ENCODE measurements at regions of chr19 and their contacts with region 1.

Region 1: DNA sequence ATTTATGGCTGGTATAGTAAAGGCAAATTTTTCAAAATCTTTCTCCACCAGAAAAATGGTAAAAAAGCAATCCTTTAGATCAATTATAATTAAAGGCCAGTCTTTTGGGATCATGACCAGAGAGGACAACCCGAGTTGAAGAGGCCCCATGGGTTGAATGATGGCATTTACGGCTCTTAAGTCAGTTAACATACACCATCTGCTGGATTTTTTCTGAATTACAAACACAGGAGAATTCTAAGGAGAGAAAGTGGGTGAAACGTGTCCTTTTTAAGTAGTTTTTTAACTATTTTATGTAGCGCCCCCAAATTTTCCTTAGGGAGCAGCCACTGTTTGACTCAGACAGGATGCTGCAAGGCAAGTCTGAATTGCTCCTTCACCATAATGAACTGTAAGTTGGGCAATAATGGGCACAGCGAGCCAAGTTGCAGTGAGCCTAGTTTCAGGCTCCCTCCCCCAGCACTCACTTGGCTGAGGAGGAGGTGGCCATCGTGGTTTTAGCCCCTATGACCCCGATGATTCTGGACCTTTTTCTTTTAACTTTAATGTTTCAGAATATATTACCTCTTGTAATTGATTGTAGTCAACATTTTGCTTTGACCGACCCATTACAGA is 13.6 kb upstream of the ZNF611 start:
- DNase-seq: peak in 1 of 2 donors; percentile 37
- ATAC-seq: peak in 1 of 4 donors; percentile 30
- H3K4me3 ChIP-seq: no peak overlapping the region
- H3K27ac ChIP-seq: no peak overlapping the region
- H3K4me1 ChIP-seq: no peaks in the 10 kb centered on the region
- H3K27me3 ChIP-seq: no peaks in the 10 kb centered on the region
- CTCF ChIP-seq: peak; percentile 27

Region 2: GRCh38 chr19:52248241-52248640 is 500.2 kb before region 1 on chr19:
- intact Hi-C with region 1: loop called (anchors 5 to 10 kb)
- DNase-seq: peak; percentile 43 to 79
- ATAC-seq: peak in 3 of 4 donors; percentile 71 to 77 (median 76)
- H3K4me3 ChIP-seq: no peak overlapping the region
- H3K27ac ChIP-seq: no peak overlapping the region
- H3K4me1 ChIP-seq: no peaks in the 10 kb centered on the region
- H3K27me3 ChIP-seq: no peaks in the 10 kb centered on the region
- CTCF ChIP-seq: peak; percentile 45

Region 3: DNA sequence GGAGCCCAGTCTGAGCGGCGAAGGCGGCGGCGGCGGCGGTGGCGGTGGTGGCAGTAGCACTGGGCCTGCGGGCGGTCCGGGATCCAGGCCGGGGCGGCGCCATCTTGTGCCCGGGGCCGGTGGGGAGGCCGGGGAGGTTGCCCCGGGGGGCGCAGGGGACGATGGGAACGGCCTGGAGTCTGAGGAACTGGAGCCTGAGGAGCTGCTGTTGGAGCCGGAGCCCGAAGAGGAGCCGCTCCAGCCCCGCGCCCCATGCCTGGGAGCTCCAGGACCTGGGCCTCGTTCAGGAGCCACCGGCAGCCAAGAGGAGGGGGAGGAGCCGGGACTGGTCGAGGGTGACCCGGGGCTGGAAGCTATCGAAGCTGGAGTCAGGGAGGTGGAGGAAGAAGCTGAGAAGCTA is 61.4 kb after region 1 on chr19:
- intact Hi-C with region 1: no loop called
- DNase-seq: no peak
- ATAC-seq: no peak
- H3K4me3 ChIP-seq: no peak overlapping the region
- H3K27ac ChIP-seq: no peak overlapping the region
- H3K4me1 ChIP-seq: no peaks in the 10 kb centered on the region
- H3K27me3 ChIP-seq: no peaks in the 10 kb centered on the region
- CTCF ChIP-seq: no peak